ENCODE measurements at regions of chr1 and their contacts with region 1.

Region 1: GRCh38 chr1:165597883-165598675 is 33.0 kb upstream of the MGST3 start:
- DNase-seq: peak; percentile 98
- H3K4me3 ChIP-seq: peak overlapping the region; percentile 50
- H3K27ac ChIP-seq: peak overlapping the region; percentile 58
- H3K4me1 ChIP-seq: no peaks in the 10 kb centered on the region
- H3K27me3 ChIP-seq: peaks cover 15% of the 10 kb centered on the region
- CTCF ChIP-seq: no peak

Region 2: GRCh38 chr1:165144757-165145397 is 453.2 kb before region 1 on chr1:
- CTCF ChIA-PET with region 1: no interaction called
- POLR2A ChIA-PET with region 1: no interaction called
- intact Hi-C with region 1: loop called (anchors 2 kb)
- DNase-seq: peak; percentile 82
- H3K4me3 ChIP-seq: no peak overlapping the region
- H3K27ac ChIP-seq: no peak overlapping the region
- H3K4me1 ChIP-seq: no peaks in the 10 kb centered on the region
- H3K27me3 ChIP-seq: peaks cover 26% of the 10 kb centered on the region
- CTCF ChIP-seq: peak; percentile 90

Region 3: GRCh38 chr1:165330483-165330882 is 267.6 kb before region 1 on chr1:
- CTCF ChIA-PET with region 1: no interaction called
- POLR2A ChIA-PET with region 1: no interaction called
- intact Hi-C with region 1: no loop called
- DNase-seq: no peak
- H3K4me3 ChIP-seq: no peak overlapping the region
- H3K27ac ChIP-seq: no peak overlapping the region
- H3K4me1 ChIP-seq: no peaks in the 10 kb centered on the region
- H3K27me3 ChIP-seq: peaks cover 10% of the 10 kb centered on the region
- CTCF ChIP-seq: no peak

Region 4: DNA sequence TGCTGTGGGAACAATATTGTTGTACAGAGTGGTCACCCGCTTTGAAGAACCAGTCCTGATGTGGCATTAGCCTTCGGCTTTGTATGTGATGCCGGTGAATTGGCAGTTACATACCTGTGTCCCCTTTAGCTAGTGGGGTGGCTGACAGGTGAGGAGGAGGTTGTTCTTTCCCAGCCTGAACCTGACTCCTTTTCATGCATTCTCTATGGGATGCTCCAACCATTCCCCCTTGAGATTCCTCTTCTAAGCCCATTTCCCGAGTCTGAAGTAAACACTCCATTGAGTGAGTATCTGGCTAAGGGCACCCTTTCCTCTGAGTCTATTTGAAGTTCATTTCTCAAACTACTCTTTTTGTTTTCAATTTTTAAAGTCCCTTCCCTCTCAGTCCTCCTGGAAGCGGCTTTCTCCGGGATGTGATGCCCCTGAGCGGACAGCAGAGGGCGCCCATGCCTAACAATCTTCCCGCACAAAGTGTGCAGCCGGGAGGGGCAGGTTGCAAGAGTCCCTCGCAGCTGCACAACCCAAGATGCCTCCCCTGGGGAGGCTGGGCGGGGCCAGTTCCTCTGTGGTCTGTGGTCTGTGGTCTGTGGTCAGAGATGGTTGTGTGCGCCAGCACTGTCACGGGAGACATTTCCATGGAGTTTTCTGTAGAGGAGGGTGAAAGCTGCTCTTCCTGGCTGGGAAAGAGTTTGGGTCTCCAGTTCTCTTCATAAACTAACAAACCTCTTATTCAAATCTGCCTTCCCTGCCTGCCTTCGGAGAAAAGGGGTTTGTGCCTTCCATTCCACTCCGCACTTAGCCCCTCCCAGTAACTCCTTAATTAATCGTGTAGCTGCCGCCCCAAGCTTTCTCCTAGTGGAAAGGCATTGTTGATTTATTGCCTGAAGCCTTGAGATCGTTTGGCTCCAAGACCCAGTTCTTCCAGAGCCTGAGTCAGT is 205.2 kb before region 1 on chr1:
- CTCF ChIA-PET with region 1: interaction called, 13 read pairs
- POLR2A ChIA-PET with region 1: no interaction called
- intact Hi-C with region 1: loop called (anchors 1 kb)
- DNase-seq: peak; percentile 85
- H3K4me3 ChIP-seq: peak overlapping the region; percentile 22
- H3K27ac ChIP-seq: no peak overlapping the region
- H3K4me1 ChIP-seq: no peaks in the 10 kb centered on the region
- H3K27me3 ChIP-seq: peaks cover 8% of the 10 kb centered on the region
- CTCF ChIP-seq: peak; percentile 95

Region 5: GRCh38 chr1:165697881-165698760 is 100.0 kb after region 1 on chr1 and contains the start of gene ALDH9A1:
- CTCF ChIA-PET with region 1: interaction called, 3 read pairs
- POLR2A ChIA-PET with region 1: no interaction called
- intact Hi-C with region 1: loop called (anchors 5 kb)
- DNase-seq: peak; percentile 94
- H3K4me3 ChIP-seq: peak within 1 kb of the TSS; percentile 81
- H3K27ac ChIP-seq: peak within 1 kb of the TSS; percentile 97
- H3K4me1 ChIP-seq: peaks cover 26% of the 10 kb centered on the region
- H3K27me3 ChIP-seq: no peaks in the 10 kb centered on the region
- CTCF ChIP-seq: peak; percentile 48
- total RNA-seq, gene ALDH9A1: 81.7 and 83.0 TPM in 2 replicates

Region 6: DNA sequence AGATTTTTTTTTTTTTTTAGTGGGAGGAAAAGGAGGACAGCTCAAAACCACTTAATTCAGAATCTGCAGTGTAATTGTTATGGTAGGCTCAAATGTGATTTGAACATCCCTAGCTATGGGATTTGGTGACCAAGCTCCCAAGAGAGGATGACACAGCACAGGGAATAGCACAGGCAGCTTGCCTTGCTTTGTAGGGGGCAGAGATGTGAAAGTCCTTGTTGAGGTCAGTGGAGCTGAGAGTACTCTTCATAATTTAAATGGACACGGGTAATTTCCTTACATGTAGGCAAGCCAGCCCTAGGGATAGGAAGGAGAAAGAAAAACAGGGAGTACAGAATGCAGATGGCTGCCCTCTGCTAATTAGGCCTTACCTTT is 226.2 kb after region 1 on chr1:
- CTCF ChIA-PET with region 1: no interaction called
- POLR2A ChIA-PET with region 1: no interaction called
- intact Hi-C with region 1: no loop called
- DNase-seq: no peak
- H3K4me3 ChIP-seq: no peak overlapping the region
- H3K27ac ChIP-seq: no peak overlapping the region
- H3K4me1 ChIP-seq: peaks cover 6% of the 10 kb centered on the region
- H3K27me3 ChIP-seq: no peaks in the 10 kb centered on the region
- CTCF ChIP-seq: no peak